Calu3 (cell line): ENCODE measurements at regions of chr5 and their contacts with region 1.

Region 1: DNA sequence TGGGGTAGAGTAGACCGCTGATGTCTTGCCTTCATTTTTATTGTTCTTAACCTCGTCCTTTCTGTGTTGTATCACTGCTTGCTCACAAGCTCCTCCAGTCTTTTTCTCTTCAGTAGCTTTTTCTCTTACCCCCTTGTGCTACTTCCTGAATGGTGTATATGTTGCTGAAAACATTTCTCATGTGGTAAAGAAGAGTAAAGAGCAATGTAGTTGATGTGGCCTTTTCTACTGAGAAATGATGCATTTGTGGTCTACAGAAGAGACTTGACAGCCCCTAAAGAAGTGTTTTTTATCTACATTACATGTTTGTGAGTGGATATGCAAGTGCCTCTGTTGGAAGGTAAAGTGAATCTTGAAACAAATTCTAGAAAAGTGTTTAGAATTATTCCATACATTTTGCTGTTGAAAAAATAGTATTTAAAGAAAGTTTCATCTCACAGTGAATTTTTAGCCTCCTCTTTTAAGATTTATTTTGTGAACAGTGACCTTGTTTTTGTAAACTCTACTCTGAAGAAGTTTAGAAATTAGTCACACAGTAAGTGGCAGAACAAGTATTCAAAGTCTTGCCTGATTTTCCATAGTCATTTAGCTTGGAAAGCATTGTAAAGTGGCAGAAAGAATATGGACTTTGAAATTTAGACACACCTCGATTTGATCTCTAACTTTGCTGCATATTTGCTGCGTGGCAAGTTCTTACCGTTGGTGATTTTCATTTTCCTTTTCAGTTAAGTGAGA is 17.4 kb downstream of the CDC42SE2 start:
- DNase-seq: no peak
- H3K4me3 Mint-ChIP-seq: peak overlapping the region; percentile 63
- H3K27ac Mint-ChIP-seq: peak overlapping the region; percentile 66
- H3K4me1 Mint-ChIP-seq: peaks cover 40% of the 10 kb centered on the region
- H3K27me3 Mint-ChIP-seq: no peaks in the 10 kb centered on the region
- CTCF ChIP-seq: no peak

Region 2: GRCh38 chr5:130616161-130616560 is 665.1 kb before region 1 on chr5:
- CTCF ChIA-PET with region 1: no interaction called
- intact Hi-C with region 1: no loop called
- DNase-seq: no peak
- H3K4me3 Mint-ChIP-seq: no peak overlapping the region
- H3K27ac Mint-ChIP-seq: no peak overlapping the region
- H3K4me1 Mint-ChIP-seq: no peaks in the 10 kb centered on the region
- H3K27me3 Mint-ChIP-seq: no peaks in the 10 kb centered on the region
- CTCF ChIP-seq: no peak

Region 3: GRCh38 chr5:131170540-131171275 is 110.6 kb before region 1 on chr5 and contains the start of gene LYRM7:
- CTCF ChIA-PET with region 1: interaction called, 3 read pairs
- intact Hi-C with region 1: loop called (anchors 5 kb)
- DNase-seq: peak; percentile 97
- H3K4me3 Mint-ChIP-seq: peak within 1 kb of the TSS; percentile 92
- H3K27ac Mint-ChIP-seq: peak within 1 kb of the TSS; percentile 79
- H3K4me1 Mint-ChIP-seq: peaks cover 19% of the 10 kb centered on the region
- H3K27me3 Mint-ChIP-seq: no peaks in the 10 kb centered on the region
- CTCF ChIP-seq: no peak
- total RNA-seq, gene LYRM7: 12.6 and 14.6 TPM in 2 replicates

Region 4: DNA sequence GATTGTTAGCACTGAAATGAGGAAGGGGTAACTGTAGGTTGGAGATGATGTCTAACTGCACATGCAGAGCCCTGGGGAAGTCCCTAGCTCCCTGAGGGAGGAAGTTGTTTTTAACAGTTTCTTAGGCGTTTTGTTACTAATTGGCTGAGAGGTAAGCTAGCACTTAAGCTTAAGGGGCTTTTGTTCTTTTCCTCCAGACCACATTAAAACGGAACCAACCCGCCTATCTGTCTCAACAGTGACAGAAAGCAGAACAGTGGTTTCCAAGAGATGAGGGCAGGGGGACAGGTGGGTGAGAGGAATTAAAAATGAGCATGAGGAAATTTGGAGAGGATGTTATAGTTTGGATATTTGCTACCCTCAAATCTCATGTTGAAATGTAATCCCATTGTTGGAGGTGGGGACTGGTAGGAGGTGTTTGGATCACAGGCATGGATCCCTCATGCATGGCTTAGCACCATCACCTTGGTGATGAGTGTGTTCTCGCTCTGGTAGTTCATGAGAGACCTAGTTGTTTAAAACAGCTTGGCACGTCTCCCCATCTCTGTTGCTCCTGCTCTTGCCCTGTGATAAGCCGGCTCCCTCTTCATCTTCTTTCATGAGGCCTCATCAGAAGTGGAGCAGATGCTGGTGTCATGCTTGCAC is 71.7 kb before region 1 on chr5:
- CTCF ChIA-PET with region 1: no interaction called
- intact Hi-C with region 1: no loop called
- DNase-seq: peak; percentile 10
- H3K4me3 Mint-ChIP-seq: peak overlapping the region; percentile 1
- H3K27ac Mint-ChIP-seq: no peak overlapping the region
- H3K4me1 Mint-ChIP-seq: peaks cover 21% of the 10 kb centered on the region
- H3K27me3 Mint-ChIP-seq: no peaks in the 10 kb centered on the region
- CTCF ChIP-seq: no peak

Region 5: DNA sequence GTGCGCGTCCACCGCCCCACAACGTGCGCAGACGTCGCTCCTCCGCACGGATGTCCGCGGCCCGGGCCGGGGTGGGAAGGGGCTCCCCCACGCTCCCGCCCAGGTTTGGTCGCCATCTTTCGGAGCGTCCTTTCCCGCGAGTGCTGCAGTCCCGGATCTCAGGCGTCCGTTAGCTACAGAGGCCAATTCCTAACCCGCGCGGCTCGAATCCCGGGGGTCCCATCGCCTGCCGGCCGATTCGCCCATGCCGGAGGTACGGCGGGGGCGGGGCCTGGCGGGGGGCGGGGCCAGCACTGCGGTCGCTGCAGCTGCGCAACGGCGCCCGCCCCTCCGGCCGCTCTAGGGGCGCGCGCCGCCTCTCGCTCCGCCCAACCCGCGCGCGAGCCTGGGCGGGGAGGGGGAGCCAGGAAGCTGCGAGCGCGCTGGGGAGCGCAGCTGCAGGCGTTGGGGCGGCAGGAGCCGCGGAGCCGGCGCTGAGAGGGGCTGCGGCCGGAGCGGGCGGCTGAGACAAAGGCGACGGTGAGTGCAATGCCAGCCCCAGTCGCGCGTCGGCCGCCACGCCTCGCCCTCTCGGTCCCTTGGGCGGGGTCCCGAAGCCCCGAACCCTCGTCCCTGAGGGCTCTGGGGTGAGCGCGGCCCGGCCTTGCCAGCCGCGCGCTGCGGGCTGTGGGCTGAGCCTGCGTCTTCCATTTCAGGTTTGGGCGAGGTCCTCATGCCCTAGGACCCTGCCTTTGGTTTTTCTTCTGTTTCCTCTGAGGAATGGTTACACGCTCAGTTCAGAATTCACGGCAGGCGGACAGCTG is 17.5 kb before region 1 on chr5 and contains the start of gene CDC42SE2:
- CTCF ChIA-PET with region 1: interaction called, 8 read pairs
- intact Hi-C with region 1: loop called (anchors 2 kb)
- DNase-seq: peak; percentile 92
- H3K4me3 Mint-ChIP-seq: peak within 1 kb of the TSS; percentile 81
- H3K27ac Mint-ChIP-seq: peak within 1 kb of the TSS; percentile 88
- H3K4me1 Mint-ChIP-seq: peaks cover 11% of the 10 kb centered on the region
- H3K27me3 Mint-ChIP-seq: no peaks in the 10 kb centered on the region
- CTCF ChIP-seq: peak; percentile 7
- total RNA-seq, gene CDC42SE2: 63.9 and 65.5 TPM in 2 replicates

Region 6: DNA sequence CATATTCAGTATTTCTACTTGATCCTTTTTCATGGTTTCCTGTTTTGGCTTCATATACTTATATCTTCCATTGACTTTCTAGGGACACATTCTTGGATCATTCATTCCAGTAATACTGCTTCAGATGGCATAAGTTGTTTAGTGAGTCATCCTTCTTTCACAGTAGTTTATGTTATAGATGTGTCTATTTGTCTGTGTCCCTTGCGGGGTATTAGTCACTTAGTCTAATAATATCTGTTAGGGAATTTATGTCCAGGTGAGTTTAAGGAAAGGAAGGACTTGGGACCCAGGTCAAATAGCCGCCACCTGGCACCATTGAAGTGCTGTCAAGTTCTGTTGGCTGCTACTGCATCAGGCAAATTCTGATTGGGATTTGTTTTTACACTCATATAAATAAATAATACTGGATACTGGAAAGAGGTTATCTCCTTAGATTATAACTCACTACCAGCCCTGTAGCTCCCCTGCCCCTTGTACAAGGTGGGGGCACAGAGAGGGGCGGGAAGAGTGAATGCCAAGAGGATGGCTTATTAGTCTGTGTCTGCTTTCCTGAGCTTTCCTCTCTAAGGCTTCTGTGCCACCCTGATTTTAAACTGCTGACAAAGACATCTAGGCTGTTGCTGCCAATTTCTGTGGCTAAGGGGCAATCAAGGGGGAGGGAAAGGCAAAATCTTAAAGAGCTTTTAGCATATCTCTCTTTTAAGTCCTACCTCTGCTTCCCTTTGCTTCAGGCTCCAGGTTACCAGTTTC is 47.4 kb after region 1 on chr5:
- CTCF ChIA-PET with region 1: interaction called, 3 read pairs
- intact Hi-C with region 1: loop called (anchors 10 kb)
- DNase-seq: no peak
- H3K4me3 Mint-ChIP-seq: no peak overlapping the region
- H3K27ac Mint-ChIP-seq: no peak overlapping the region
- H3K4me1 Mint-ChIP-seq: peaks cover 40% of the 10 kb centered on the region
- H3K27me3 Mint-ChIP-seq: no peaks in the 10 kb centered on the region
- CTCF ChIP-seq: no peak

Region 7: GRCh38 chr5:131357739-131358561 is 76.7 kb after region 1 on chr5:
- CTCF ChIA-PET with region 1: no interaction called
- intact Hi-C with region 1: no loop called
- DNase-seq: no peak
- H3K4me3 Mint-ChIP-seq: no peak overlapping the region
- H3K27ac Mint-ChIP-seq: no peak overlapping the region
- H3K4me1 Mint-ChIP-seq: peaks cover 37% of the 10 kb centered on the region
- H3K27me3 Mint-ChIP-seq: no peaks in the 10 kb centered on the region
- CTCF ChIP-seq: no peak

Region 8: GRCh38 chr5:131382407-131383395 is 101.4 kb after region 1 on chr5:
- CTCF ChIA-PET with region 1: no interaction called
- intact Hi-C with region 1: loop called (anchors 5 kb)
- DNase-seq: peak; percentile 63
- H3K4me3 Mint-ChIP-seq: no peak overlapping the region
- H3K27ac Mint-ChIP-seq: no peak overlapping the region
- H3K4me1 Mint-ChIP-seq: peaks cover 33% of the 10 kb centered on the region
- H3K27me3 Mint-ChIP-seq: no peaks in the 10 kb centered on the region
- CTCF ChIP-seq: peak; percentile 80